ENCODE measurements at regions of chr17 and their contacts with region 1.

Region 1: GRCh38 chr17:5198472-5198871 is 6.8 kb upstream of the ZNF594 start:
- DNase-seq: peak in 3 of 10 donors; percentile 3 to 30 (median 21)
- ATAC-seq: peak in 1 of 2 donors; percentile 53
- H3K4me3 Mint-ChIP-seq: peak overlapping the region in 4 of 10 donors; percentile 26 to 45 (median 40)
- H3K27ac Mint-ChIP-seq: peak overlapping the region; percentile 4 to 90 (median 77)
- H3K4me1 Mint-ChIP-seq: peaks cover 4 to 26% (median 15%) of the 10 kb centered on the region in 4 donors
- H3K27me3 Mint-ChIP-seq: no peaks in the 10 kb centered on the region

Region 2: GRCh38 chr17:5210614-5211252 is 12.3 kb after region 1 on chr17:
- POLR2A ChIA-PET with region 1: interaction called, 11 read pairs
- DNase-seq: peak in 1 of 10 donors; percentile 16
- ATAC-seq: peak in 1 of 2 donors; percentile 56
- H3K4me3 Mint-ChIP-seq: peak overlapping the region in 9 of 10 donors; percentile 4 to 67 (median 45)
- H3K27ac Mint-ChIP-seq: peak overlapping the region; percentile 60 to 92 (median 86)
- H3K4me1 Mint-ChIP-seq: peaks cover 14 to 50% (median 32%) of the 10 kb centered on the region in 4 donors
- H3K27me3 Mint-ChIP-seq: no peaks in the 10 kb centered on the region